HepG2 (cell line): ENCODE measurements at regions of chr2 and their contacts with region 1.

Region 1: DNA sequence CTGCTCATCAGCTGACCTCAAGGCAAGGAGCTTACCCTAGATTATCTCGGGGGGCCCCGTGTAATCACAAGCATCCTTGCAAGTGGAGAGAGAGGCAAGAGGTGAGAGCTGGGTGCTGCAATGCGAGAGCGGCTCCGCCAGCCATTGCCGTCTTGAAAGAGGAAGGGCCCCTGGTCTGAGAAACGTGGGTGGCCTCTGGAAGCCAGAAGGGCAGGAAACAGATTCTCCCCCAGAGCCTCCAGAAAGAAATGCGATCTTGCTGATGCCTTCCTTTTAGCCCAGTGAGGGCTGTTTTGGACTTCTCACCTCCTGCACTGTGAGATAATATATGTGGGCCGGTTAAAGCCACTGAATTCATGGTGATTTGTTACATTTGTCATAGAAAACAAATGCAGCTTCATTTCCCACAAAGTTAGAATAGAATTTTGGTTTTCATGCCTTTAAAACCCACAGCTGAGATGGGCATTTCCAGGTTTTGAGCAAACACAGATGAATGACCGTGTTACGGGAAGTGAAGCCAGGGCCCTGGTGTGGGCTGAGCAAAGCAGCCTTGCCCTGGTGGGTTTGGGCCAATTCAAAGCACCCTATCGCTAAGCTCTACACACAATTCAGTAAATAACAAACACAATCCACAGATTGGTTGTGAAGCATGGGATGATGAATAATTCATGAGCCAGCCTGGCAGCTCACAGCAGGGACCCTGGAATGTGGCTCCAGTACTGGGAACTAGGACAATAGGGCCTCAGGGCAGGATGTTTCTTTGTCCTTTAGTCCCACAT is 319.9 kb upstream of the HS6ST1 start:
- DNase-seq: no peak
- ATAC-seq: no peak
- H3K4me3 ChIP-seq: no peak overlapping the region
- H3K27ac ChIP-seq: no peak overlapping the region
- H3K4me1 ChIP-seq: no peaks in the 10 kb centered on the region
- H3K27me3 ChIP-seq: peaks cover 4 to 36% of the 10 kb centered on the region in 2 experiments; a peak in 4 of 5 replicates
- CTCF ChIP-seq: no peak
- EP300 ChIP-seq: no peak
- POLR2A ChIP-seq: no peak
- RAD21 ChIP-seq: no peak

Region 2: GRCh38 chr2:128069769-128070168 is 568.8 kb before region 1 on chr2:
- CTCF ChIA-PET with region 1: no interaction called
- POLR2A ChIA-PET with region 1: no interaction called
- in situ Hi-C with region 1: loop called (anchors 25 kb)
- intact Hi-C with region 1: no loop called
- DNase-seq: no peak
- ATAC-seq: no peak
- H3K4me3 ChIP-seq: no peak overlapping the region
- H3K27ac ChIP-seq: no peak overlapping the region
- H3K4me1 ChIP-seq: peaks cover 15% of the 10 kb centered on the region
- H3K27me3 ChIP-seq: no peaks in the 10 kb centered on the region
- CTCF ChIP-seq: no peak
- EP300 ChIP-seq: no peak
- POLR2A ChIP-seq: no peak
- RAD21 ChIP-seq: no peak

Region 3: GRCh38 chr2:128513961-128514283 is 124.6 kb before region 1 on chr2:
- CTCF ChIA-PET with region 1: no interaction called
- POLR2A ChIA-PET with region 1: no interaction called
- in situ Hi-C with region 1: no loop called
- intact Hi-C with region 1: no loop called
- DNase-seq: no peak
- ATAC-seq: no peak
- H3K4me3 ChIP-seq: no peak overlapping the region
- H3K27ac ChIP-seq: no peak overlapping the region
- H3K4me1 ChIP-seq: no peaks in the 10 kb centered on the region
- H3K27me3 ChIP-seq: peaks cover 0 to 36% of the 10 kb centered on the region in 2 experiments; a peak in 3 of 5 replicates
- CTCF ChIP-seq: no peak
- EP300 ChIP-seq: no peak
- POLR2A ChIP-seq: no peak
- RAD21 ChIP-seq: no peak

Region 4: DNA sequence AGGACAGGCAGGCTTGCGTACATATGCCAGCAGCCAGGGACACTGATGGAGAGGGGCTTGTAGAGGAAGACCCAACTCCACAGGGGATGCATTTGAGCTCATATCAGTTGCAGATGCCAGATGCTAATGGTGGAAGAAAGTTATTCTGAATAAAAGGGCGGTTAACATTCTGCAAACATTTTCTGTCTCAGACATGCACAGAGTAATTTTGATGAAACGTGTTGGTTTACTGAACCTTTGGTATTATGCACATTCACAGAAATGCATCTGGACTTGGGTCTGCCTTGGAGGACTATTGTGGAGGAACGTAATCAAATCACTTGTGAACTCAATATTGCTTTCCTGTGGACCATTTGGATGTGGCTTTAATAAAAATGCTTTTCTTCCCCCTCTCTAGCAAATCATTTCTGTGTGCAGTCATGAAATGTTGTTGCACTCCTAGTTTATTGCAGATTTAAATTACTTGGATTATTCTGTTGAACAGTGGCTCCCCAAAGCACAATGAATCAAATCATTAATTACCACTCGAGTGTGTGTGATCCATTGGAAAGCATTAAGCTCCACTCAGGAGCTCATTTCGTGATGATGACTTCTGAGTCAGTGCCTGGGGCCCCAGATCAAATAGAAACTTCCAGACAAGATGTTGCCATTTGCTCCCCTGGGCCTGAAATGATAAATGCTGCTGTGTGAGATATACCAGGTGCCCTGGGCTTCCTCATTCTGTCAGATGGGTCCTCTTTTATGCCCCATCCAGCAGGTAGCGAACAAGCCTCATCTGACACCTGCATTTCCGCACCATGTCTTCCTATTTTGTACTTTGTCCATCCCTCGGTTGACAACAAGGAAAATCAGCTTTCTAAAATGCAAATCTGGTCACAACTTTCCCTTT is 377.1 kb after region 1 on chr2:
- CTCF ChIA-PET with region 1: no interaction called
- POLR2A ChIA-PET with region 1: no interaction called
- in situ Hi-C with region 1: no loop called
- intact Hi-C with region 1: no loop called
- DNase-seq: no peak
- ATAC-seq: no peak
- H3K4me3 ChIP-seq: no peak overlapping the region
- H3K27ac ChIP-seq: no peak overlapping the region
- H3K4me1 ChIP-seq: no peaks in the 10 kb centered on the region
- H3K27me3 ChIP-seq: peaks cover 1 to 15% of the 10 kb centered on the region in 2 experiments; a peak in 3 of 5 replicates
- CTCF ChIP-seq: no peak
- EP300 ChIP-seq: no peak
- POLR2A ChIP-seq: no peak
- RAD21 ChIP-seq: no peak